ENCODE measurements at regions of chr10 and their contacts with region 1.

Region 1: GRCh38 chr10:90969947-90970684 is 49.2 kb upstream of the ANKRD1 start:
- DNase-seq: no peak
- ATAC-seq: peak; percentile 52

Region 2: GRCh38 chr10:90912174-90912573 is 57.9 kb before region 1 on chr10:
- intact Hi-C with region 1: loop called (anchors 2 kb)
- DNase-seq: no peak
- ATAC-seq: no peak

Region 3: GRCh38 chr10:90920986-90921666 is 49.0 kb before region 1 on chr10 and contains the start of gene ANKRD1:
- intact Hi-C with region 1: loop called (anchors 2 kb)
- DNase-seq: peak; percentile 65
- ATAC-seq: peak; percentile 94
- total RNA-seq, gene ANKRD1: 2,249 TPM